ENCODE measurements at regions of chr2 and their contacts with region 1.

Region 1: DNA sequence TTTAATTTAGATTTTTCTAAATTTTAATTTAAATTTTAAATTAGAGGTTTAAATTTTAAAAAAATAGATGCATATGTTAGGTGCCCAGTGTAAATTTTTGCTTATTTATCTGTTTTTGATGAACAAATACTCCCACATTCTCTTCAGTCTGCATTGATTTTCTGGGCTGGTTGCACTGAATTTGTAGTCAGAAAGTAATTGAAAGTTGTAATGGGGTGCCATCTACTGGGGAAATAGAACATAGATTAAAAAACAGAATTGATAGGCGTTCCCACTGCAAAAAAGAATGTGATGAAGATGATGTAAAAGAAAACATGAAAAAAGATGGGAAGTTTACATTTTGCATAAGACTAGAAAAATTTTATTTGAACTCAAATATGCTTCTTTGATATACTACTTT is 51.7 kb upstream of the CCDC85A start:
- DNase-seq: peak; percentile 66
- H3K4me3 Mint-ChIP-seq: no peak overlapping the region
- H3K27ac Mint-ChIP-seq: no peak overlapping the region
- H3K4me1 Mint-ChIP-seq: no peaks in the 10 kb centered on the region
- H3K27me3 Mint-ChIP-seq: no peaks in the 10 kb centered on the region
- CTCF ChIP-seq: peak; percentile 29

Region 2: GRCh38 chr2:56009758-56010458 is 122.2 kb before region 1 on chr2:
- CTCF ChIA-PET with region 1: interaction called, 5 read pairs
- POLR2A ChIA-PET with region 1: no interaction called
- intact Hi-C with region 1: loop called (anchors 2 kb)
- DNase-seq: peak; percentile 60
- H3K4me3 Mint-ChIP-seq: no peak overlapping the region
- H3K27ac Mint-ChIP-seq: no peak overlapping the region
- H3K4me1 Mint-ChIP-seq: peaks cover 5% of the 10 kb centered on the region
- H3K27me3 Mint-ChIP-seq: no peaks in the 10 kb centered on the region
- CTCF ChIP-seq: peak; percentile 68

Region 3: GRCh38 chr2:56077352-56077915 is 54.7 kb before region 1 on chr2:
- CTCF ChIA-PET with region 1: interaction called, 10 read pairs
- POLR2A ChIA-PET with region 1: no interaction called
- intact Hi-C with region 1: loop called (anchors 1 kb)
- DNase-seq: peak; percentile 54
- H3K4me3 Mint-ChIP-seq: no peak overlapping the region
- H3K27ac Mint-ChIP-seq: no peak overlapping the region
- H3K4me1 Mint-ChIP-seq: no peaks in the 10 kb centered on the region
- H3K27me3 Mint-ChIP-seq: peaks cover 15% of the 10 kb centered on the region
- CTCF ChIP-seq: peak; percentile 57

Measured in MCF 10A (cell line).